ENCODE measurements at regions of chr17 and their contacts with region 1.

Region 1: GRCh38 chr17:78250891-78251794 is 19.7 kb downstream of the TMEM235 start:
- DNase-seq: peak; percentile 84 to 89 (median 86)
- H3K4me3 ChIP-seq: peak overlapping the region in 3 of 7 experiments; percentile 42 to 64 (median 43)
- H3K27ac ChIP-seq: no peak overlapping the region
- H3K4me1 ChIP-seq: peaks cover 8 to 67% (median 59%) of the 10 kb centered on the region in 4 experiments
- H3K27me3 ChIP-seq: no peaks in the 10 kb centered on the region

Region 2: DNA sequence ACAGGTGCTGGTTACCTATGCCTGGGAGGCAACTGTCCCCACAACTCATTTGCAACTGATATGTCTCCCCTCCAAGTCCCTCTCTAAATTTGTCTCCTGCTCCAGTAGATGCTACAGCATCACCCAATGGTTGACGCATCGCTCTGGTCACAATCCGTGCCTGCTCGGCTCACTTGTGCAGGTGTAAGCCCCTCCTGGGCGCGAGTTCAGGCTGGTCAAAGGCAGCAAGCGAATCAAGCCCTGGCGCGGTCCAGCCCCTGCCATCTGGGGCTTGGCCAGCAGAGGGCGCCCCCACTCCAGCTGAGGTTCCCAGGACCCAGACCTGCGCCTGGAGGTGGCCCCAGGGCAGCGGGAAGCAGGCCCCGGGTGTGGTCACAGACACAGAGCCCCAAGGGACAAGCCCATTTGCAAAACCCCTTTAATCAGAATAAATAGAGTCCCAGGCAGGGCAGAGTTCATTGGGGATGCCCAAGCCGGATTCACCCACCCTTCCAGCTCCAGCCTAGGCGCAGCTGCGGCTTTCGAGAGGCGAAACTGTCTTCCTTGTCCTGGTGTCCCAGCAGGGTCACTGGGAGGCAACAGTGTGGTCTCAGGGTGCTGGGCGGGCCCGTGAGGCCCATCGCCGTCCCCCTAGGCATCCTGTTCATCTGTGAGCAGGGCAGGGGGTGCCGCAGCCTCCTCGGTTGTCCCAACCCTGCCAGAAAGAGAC is 138.5 kb before region 1 on chr17:
- CTCF ChIA-PET with region 1: interaction called, 11 read pairs
- POLR2A ChIA-PET with region 1: no interaction called
- DNase-seq: peak; percentile 52 to 67 (median 61)
- H3K4me3 ChIP-seq: no peak overlapping the region
- H3K27ac ChIP-seq: no peak overlapping the region
- H3K4me1 ChIP-seq: peaks cover 0 to 8% (median 4%) of the 10 kb centered on the region in 4 experiments
- H3K27me3 ChIP-seq: no peaks in the 10 kb centered on the region

Region 3: DNA sequence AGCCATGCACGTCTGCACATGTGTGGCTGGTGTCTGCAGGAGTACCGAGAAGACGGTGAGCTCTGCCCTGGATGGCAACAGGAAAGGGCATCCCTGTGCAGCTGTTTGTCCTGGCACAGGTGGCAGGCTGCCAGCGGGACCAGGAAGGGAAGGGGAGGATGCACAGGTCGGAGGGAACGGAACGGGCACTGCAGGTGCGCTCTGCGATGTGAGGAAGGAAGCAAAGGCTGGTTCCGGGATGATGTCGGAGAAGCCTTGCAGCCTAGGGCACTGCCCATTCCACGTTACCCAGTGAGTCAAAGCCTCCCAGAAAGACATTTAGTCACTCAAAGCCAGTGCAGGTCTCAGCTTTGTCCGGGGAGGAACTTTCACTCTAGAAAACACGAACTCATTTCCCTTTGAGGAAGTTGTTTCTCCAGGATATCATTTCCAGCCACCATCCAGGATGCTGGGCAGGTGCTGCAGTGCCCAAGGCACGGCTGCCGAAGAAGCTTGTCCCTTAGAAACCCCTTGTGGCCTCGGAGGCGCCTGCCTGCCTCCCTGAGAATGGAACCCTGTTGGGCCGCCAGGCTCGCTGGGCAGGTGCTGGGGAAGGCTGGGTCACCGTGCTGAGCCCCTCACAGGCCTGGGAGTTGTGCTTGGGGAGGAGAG is 24.3 kb before region 1 on chr17:
- CTCF ChIA-PET with region 1: interaction called, 11 read pairs
- POLR2A ChIA-PET with region 1: no interaction called
- DNase-seq: peak in 2 of 3 donors; percentile 73 to 76
- H3K4me3 ChIP-seq: peak overlapping the region in 2 of 7 experiments; percentile 23 to 61
- H3K27ac ChIP-seq: no peak overlapping the region
- H3K4me1 ChIP-seq: peaks cover 0 to 38% (median 23%) of the 10 kb centered on the region in 4 experiments
- H3K27me3 ChIP-seq: peaks cover 0 to 13% (median 12%) of the 10 kb centered on the region in 5 experiments

Region 4: DNA sequence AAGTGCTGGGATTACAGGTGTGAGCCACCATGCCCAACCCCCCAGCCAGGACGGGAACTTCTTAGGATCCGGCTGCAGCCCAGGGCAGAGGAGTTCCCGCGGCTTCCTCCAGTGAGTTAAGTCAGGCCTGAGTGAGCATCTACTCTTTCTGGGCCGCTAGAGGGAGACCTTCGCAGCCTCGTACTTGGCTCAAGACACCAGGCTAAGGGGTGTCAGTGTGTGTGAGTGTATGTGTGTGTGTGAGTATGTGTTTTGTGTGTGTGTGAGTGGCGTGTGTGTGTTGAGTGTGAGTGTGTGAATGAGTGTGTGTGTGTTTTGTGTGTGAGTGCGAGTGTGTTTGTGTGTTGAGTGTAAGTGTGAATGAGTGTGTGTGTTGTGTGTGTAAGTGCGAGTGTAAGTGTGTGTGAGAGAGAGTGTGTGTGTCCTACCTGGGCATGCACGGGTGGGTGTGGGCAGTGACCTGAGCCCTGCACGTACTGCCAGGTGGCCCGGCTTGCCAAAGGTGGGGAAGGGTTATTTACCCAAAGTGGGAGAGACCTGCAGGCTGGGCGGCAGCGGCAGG is 38.7 kb after region 1 on chr17:
- CTCF ChIA-PET with region 1: interaction called, 23 read pairs
- POLR2A ChIA-PET with region 1: interaction called, 3 read pairs
- DNase-seq: peak; percentile 89 to 94 (median 94)
- H3K4me3 ChIP-seq: no peak overlapping the region
- H3K27ac ChIP-seq: no peak overlapping the region
- H3K4me1 ChIP-seq: peaks cover 0 to 38% (median 28%) of the 10 kb centered on the region in 4 experiments
- H3K27me3 ChIP-seq: no peaks in the 10 kb centered on the region

Region 5: GRCh38 chr17:78421484-78422266 is 170.5 kb after region 1 on chr17:
- CTCF ChIA-PET with region 1: interaction called, 31 read pairs
- POLR2A ChIA-PET with region 1: interaction called, 5 read pairs
- DNase-seq: peak; percentile 76 to 82 (median 77)
- H3K4me3 ChIP-seq: no peak overlapping the region
- H3K27ac ChIP-seq: no peak overlapping the region
- H3K4me1 ChIP-seq: peaks cover 4 to 15% (median 13%) of the 10 kb centered on the region in 4 experiments
- H3K27me3 ChIP-seq: no peaks in the 10 kb centered on the region

Measured in common myeloid progenitor, CD34-positive (primary cell).